Left cardiac atrium (tissue), 4 donors: ENCODE measurements at regions of chr2 and their contacts with region 1.

Region 1: DNA sequence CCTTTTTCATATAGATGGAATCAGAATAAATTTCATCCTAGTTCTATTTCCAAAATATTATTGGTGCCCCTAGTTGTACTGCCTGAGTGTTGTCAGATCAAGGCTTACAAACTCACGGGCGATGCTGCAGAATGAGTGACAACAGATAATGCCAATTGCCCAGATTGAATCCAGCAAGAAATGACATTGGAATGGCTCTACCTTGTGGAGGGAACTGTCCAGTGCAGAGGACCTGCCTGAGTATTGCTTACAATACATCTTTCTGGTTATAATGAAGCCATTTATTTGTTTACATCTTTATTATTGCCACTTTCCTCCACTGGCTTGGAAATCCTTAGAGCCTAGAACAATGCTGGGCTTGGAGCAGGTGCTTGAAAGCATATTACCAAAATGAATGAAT is 7.8 kb upstream of the IL1R2 start:
- DNase-seq: no peak
- ATAC-seq: peak; percentile 9 to 55

Region 2: DNA sequence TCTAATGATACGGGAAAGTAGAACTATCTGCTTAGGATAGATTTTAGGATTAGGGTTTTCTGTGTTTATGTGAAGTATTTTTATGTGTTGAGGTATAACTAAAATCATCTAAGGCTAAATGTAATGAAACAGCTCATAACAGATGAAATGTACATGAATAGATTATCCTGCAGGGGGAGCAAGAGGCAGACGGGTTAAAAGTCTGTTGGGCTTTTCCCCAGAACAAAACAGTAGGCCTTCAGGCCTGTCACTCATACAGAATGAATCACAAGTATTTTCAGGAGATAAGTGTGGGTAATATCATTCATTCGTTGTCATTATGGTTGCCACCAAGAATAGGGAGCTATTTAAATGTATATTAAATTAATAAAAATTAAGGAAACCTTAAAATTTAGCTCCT is 100.1 kb before region 1 on chr2:
- intact Hi-C with region 1: loop called in 1 of 2 experiments (anchors 5 kb)
- DNase-seq: no peak
- ATAC-seq: peak; percentile 76 to 82

Region 3: GRCh38 chr2:102206666-102207341 is 222.9 kb after region 1 on chr2:
- intact Hi-C with region 1: no loop called
- DNase-seq: no peak
- ATAC-seq: no peak